Caco-2 (cell line): ENCODE measurements at regions of chr6 and their contacts with region 1.

Region 1: DNA sequence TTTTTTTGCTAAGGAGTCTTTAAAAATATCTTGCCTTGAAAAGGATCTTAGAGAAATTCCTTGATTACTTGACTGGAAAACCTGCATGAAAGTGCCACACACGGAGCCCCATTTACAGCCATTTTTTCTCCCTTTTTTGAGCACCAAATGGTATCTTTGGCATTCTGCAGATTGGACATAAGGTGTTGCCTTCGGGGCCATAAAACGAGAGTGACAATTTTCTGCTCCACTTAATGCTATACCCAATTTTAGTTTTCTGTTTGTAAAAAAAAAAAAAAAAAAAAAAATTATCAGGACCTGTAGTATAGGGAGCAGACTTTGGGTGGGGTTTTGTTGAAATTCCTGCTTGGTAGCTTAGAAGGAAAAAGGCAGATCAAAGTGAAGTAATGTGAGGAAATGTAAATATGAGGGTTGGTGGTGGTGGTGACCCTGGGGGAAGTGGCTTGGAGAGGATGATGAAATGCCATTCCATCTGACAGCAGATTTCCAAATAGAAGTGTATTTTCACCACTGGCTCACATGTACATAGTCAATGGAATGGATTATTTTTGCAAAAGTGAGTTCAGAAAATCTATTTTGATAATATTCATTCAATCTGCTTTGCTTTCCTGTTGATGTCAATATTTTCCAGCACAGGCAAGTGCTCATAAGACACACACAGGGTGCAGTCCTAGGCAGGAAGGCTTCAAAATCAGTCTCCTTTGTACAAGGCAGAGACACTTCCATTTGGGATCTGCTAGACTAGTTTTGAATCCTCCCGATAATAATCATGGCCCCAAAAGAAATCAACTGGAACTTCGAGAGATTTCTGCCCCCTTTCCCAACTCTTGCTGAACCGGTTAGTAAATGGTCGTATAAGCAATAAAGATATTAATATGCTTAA is 212.0 kb upstream of the SOX4 start:
- DNase-seq: peak; percentile 66 to 78
- H3K4me3 ChIP-seq: no peak overlapping the region
- H3K4me3 Mint-ChIP-seq: peak overlapping the region; percentile 29
- H3K27ac Mint-ChIP-seq: peak overlapping the region; percentile 85
- H3K4me1 ChIP-seq: peaks cover 64% of the 10 kb centered on the region
- H3K4me1 Mint-ChIP-seq: peaks cover 61% of the 10 kb centered on the region
- H3K27me3 ChIP-seq: no peaks in the 10 kb centered on the region
- H3K27me3 Mint-ChIP-seq: no peaks in the 10 kb centered on the region
- CTCF ChIP-seq: no peak

Region 2: GRCh38 chr6:21360341-21360770 is 21.2 kb before region 1 on chr6:
- CTCF ChIA-PET with region 1: interaction called, 3 read pairs
- POLR2A ChIA-PET with region 1: no interaction called
- intact Hi-C with region 1: loop called (anchors 1 kb)
- DNase-seq: peak; percentile 70 to 81
- H3K4me3 ChIP-seq: no peak overlapping the region
- H3K4me3 Mint-ChIP-seq: peak overlapping the region; percentile 19
- H3K27ac Mint-ChIP-seq: no peak overlapping the region
- H3K4me1 ChIP-seq: peaks cover 23% of the 10 kb centered on the region
- H3K4me1 Mint-ChIP-seq: peaks cover 31% of the 10 kb centered on the region
- H3K27me3 ChIP-seq: no peaks in the 10 kb centered on the region
- H3K27me3 Mint-ChIP-seq: no peaks in the 10 kb centered on the region
- CTCF ChIP-seq: peak in 1 of 2 experiments; percentile 7

Region 3: DNA sequence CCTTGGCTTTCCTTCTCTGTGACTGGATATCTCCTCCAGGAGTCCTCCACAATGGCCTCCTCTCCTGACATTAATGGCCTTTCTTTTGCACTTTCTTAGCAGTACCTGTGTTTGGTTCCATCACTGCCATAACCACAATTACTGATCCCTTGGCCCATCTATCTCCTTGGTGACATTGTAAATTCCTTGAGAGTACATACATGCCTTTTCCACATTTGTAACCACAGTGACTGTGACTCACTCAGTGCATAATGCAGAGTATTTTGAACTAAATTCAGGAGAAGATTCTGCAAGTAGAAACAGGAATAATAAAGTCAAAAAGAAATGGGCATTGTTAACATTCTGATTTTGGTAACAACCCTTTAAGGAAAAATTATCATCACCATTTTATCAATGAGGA is 14.7 kb after region 1 on chr6:
- CTCF ChIA-PET with region 1: interaction called, 4 read pairs
- POLR2A ChIA-PET with region 1: no interaction called
- intact Hi-C with region 1: loop called (anchors 1 kb)
- DNase-seq: no peak
- H3K4me3 ChIP-seq: no peak overlapping the region
- H3K4me3 Mint-ChIP-seq: no peak overlapping the region
- H3K27ac Mint-ChIP-seq: peak overlapping the region; percentile 14
- H3K4me1 ChIP-seq: peaks cover 64% of the 10 kb centered on the region
- H3K4me1 Mint-ChIP-seq: peaks cover 34% of the 10 kb centered on the region
- H3K27me3 ChIP-seq: no peaks in the 10 kb centered on the region
- H3K27me3 Mint-ChIP-seq: no peaks in the 10 kb centered on the region
- CTCF ChIP-seq: no peak